ENCODE measurements at regions of chr5 and their contacts with region 1.

Region 1: DNA sequence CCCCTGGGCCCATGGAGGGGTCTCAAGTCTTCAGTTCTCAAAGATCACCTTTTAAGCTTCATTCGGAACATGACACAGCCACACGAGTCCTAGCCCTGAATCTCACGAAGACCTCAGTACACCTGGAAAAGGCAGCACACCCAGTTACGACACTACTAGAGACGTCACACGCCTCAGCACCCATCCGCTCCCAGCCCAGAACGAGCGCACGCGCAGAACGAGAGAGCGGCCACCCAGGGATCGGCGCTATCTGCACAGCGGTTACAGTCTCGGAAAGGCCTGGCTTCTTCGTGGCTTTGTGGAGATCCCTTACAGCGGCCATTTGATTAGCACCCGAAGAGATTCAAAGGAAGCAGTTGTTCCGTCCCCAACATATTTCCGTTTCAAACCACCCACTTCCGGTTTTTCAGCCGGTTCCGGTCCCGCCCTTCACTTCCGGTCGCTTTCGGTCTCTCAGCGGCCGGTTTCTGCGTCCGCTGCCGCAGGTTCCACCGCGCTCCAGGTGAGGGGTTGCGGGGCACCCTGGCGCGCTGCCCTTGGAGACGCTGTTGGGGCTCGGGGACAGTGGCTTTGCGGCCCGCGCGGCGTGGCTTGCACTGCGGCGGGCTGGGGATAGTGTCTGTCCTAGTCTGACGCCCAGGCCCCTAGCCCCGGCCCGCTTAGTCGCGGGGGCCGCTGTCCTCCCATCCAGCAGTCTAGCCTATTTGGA is at the start of gene UBLCP1:
- DNase-seq: peak; percentile 87
- ATAC-seq: peak; percentile 97
- total RNA-seq, gene UBLCP1: 13.3 TPM

Region 2: DNA sequence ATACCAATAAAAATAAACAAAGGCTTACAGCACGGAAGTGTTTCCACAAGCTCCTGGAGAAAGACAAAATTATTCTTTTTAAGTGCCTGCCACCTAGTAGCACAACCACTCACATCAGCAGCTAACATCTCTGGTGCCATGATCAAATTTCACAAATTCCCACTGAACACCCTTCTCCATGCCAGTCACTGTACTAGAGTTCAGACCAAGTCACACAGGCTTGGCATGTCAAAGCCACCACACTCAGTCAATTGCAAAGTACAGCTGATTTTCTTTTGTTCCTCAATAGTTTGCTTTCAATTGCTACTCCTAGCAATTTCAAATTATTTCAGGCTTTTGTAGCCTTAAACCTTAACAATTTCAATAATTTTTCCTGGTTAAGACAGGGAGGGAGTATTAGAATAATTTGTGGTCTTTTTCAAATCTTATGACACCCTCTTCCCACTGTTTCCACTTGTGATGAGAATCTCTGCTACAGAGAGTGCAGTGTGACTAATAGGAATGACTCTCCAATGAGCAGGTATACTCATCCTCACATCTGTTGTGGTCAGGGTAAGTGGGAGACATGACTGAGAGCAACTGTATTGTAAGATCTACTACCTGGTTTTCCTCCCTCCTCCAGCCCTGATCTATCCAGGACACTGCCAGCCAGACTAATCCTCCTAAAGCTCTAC is 99.8 kb before region 1 on chr5:
- intact Hi-C with region 1: loop called (anchors 5 kb)
- DNase-seq: no peak
- ATAC-seq: no peak

Measured in Right ventricle myocardium superior (tissue), 1 donor.